Activated B cell treated with CpG ODN at 0.5 μM for 24 hours (primary cell): ENCODE measurements at regions of chr3 and their contacts with region 1.

Region 1: GRCh38 chr3:42012935-42013690 is 51.2 kb upstream of the ULK4 start:
- DNase-seq: peak; percentile 73
- ATAC-seq: peak; percentile 68
- H3K4me3 Mint-ChIP-seq: peak overlapping the region; percentile 97
- H3K27ac Mint-ChIP-seq: peak overlapping the region; percentile 99
- H3K4me1 Mint-ChIP-seq: peaks cover 59% of the 10 kb centered on the region
- H3K27me3 Mint-ChIP-seq: no peaks in the 10 kb centered on the region
- CTCF ChIP-seq: no peak

Region 2: GRCh38 chr3:40623567-40623966 is 1389.5 kb before region 1 on chr3:
- CTCF ChIA-PET with region 1: no interaction called
- POLR2A ChIA-PET with region 1: interaction called, 5 read pairs
- intact Hi-C with region 1: loop called (anchors 1 kb)
- DNase-seq: peak; percentile 65
- ATAC-seq: peak; percentile 92
- H3K4me3 Mint-ChIP-seq: no peak overlapping the region
- H3K27ac Mint-ChIP-seq: no peak overlapping the region
- H3K4me1 Mint-ChIP-seq: peaks cover 13% of the 10 kb centered on the region
- H3K27me3 Mint-ChIP-seq: no peaks in the 10 kb centered on the region
- CTCF ChIP-seq: no peak

Region 3: GRCh38 chr3:42025370-42026138 is 12.4 kb after region 1 on chr3:
- CTCF ChIA-PET with region 1: no interaction called
- POLR2A ChIA-PET with region 1: interaction called, 26 read pairs
- intact Hi-C with region 1: loop called (anchors 1 kb)
- DNase-seq: no peak
- ATAC-seq: peak; percentile 42
- H3K4me3 Mint-ChIP-seq: peak overlapping the region; percentile 70
- H3K27ac Mint-ChIP-seq: peak overlapping the region; percentile 82
- H3K4me1 Mint-ChIP-seq: peaks cover 80% of the 10 kb centered on the region
- H3K27me3 Mint-ChIP-seq: no peaks in the 10 kb centered on the region
- CTCF ChIP-seq: no peak

Region 4: DNA sequence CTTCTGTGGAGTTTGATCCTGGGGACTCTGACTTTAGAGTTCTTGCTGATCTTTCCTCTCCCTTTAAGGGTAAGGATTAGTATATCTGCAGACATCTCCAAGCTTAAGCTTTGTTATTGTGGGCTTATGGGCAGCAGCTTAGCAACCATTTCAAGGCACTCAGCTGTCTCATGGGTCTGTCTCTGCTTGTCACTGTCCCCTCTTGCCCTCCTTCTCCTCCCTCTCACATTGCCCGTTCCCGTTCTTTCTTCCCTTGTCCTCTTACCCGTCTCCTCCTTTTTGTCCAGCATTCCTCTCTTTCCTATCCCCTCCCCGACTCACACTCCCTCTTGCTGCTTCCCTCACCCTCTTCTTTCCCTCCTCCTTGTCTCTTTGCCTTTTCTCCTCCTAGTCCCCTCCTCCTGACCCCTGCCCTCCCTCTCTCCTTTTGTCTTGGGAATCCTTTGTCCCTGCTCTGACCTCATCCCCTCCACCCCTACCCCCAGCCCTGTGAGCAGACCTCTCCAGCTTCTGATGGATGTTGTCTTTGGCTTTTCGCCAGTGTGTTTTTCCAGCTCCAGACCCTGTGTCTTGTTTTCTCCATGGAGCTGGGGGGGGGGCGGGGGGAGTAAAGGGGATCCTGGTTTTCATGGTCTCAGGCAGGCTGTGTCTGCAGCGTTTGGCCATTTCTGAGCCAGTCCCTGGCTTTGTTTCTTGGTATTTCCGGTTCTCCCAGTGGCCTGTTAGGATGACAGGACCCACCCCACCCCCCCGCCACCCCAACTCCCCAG is 30.1 kb after region 1 on chr3:
- CTCF ChIA-PET with region 1: no interaction called
- POLR2A ChIA-PET with region 1: interaction called, 28 read pairs
- intact Hi-C with region 1: no loop called
- DNase-seq: no peak
- ATAC-seq: peak; percentile 22
- H3K4me3 Mint-ChIP-seq: no peak overlapping the region
- H3K27ac Mint-ChIP-seq: peak overlapping the region; percentile 68
- H3K4me1 Mint-ChIP-seq: peaks cover 84% of the 10 kb centered on the region
- H3K27me3 Mint-ChIP-seq: no peaks in the 10 kb centered on the region
- CTCF ChIP-seq: no peak

Region 5: DNA sequence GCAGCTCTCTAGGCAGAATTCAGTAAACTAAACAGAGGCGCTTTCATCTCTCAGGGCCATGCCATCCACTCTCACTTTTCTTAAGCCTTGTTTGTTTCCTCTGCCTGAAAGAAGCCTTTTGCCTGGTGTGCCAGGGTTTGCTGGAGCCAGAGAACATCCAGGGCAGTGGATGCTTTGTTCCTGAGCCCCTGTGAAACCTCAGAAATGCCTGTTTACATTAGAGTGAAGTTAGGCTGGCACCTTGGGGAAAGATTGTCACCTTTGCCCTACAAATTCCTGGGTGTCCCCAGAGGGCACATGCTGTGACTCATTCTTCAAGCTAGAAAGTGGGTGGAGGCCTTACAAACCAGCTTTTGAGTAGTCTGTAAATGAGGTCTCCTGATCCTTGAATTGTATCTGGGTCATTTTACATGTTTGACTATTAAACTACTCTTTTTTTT is 67.4 kb after region 1 on chr3:
- CTCF ChIA-PET with region 1: interaction called, 5 read pairs
- POLR2A ChIA-PET with region 1: interaction called, 48 read pairs
- intact Hi-C with region 1: loop called (anchors 1 kb)
- DNase-seq: peak; percentile 51
- ATAC-seq: peak; percentile 94
- H3K4me3 Mint-ChIP-seq: peak overlapping the region; percentile 74
- H3K27ac Mint-ChIP-seq: peak overlapping the region; percentile 97
- H3K4me1 Mint-ChIP-seq: peaks cover 85% of the 10 kb centered on the region
- H3K27me3 Mint-ChIP-seq: no peaks in the 10 kb centered on the region
- CTCF ChIP-seq: no peak

Region 6: GRCh38 chr3:42101048-42101447 is 87.9 kb after region 1 on chr3:
- CTCF ChIA-PET with region 1: interaction called, 33 read pairs
- POLR2A ChIA-PET with region 1: interaction called, 16 read pairs
- intact Hi-C with region 1: loop called (anchors 1 kb)
- DNase-seq: no peak
- ATAC-seq: no peak
- H3K4me3 Mint-ChIP-seq: no peak overlapping the region
- H3K27ac Mint-ChIP-seq: peak overlapping the region; percentile 24
- H3K4me1 Mint-ChIP-seq: peaks cover 37% of the 10 kb centered on the region
- H3K27me3 Mint-ChIP-seq: no peaks in the 10 kb centered on the region
- CTCF ChIP-seq: no peak

Region 7: GRCh38 chr3:42600111-42600988 is 587.2 kb after region 1 on chr3 and contains the start of gene NKTR:
- CTCF ChIA-PET with region 1: no interaction called
- POLR2A ChIA-PET with region 1: interaction called, 4 read pairs
- intact Hi-C with region 1: loop called (anchors 5 kb)
- DNase-seq: peak; percentile 98
- ATAC-seq: peak; percentile 92
- H3K4me3 Mint-ChIP-seq: peak within 1 kb of the TSS; percentile 91
- H3K27ac Mint-ChIP-seq: peak within 1 kb of the TSS; percentile 96
- H3K4me1 Mint-ChIP-seq: peaks cover 34% of the 10 kb centered on the region
- H3K27me3 Mint-ChIP-seq: no peaks in the 10 kb centered on the region
- CTCF ChIP-seq: no peak
- total RNA-seq, gene NKTR: 107 and 126 TPM in 2 replicates